Lower leg skin (tissue), 4 donors: ENCODE measurements at regions of chr1 and their contacts with region 1.

Region 1: DNA sequence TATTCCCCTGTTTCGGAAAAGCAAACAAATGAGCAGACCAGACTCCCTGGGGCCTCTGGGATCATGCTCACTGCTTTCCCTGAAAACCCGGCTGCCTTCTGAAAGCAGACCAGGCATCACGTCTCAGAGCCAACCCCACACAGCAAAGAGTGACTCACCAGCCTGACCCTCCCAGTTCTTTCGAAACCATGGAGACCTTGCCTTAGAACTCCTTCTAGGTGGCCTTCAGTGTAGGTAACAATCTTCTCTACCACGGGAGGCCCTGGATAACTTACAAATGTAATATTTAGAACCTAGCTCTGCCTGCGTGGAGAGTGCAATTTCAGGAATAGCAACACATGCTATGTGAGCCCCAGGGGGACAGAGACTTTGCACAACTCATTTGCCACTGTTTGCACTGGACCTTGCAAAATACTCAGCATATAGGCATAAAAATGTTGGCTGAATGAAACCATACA is 105.2 kb downstream of the SUSD4 start:
- DNase-seq: no peak
- H3K4me3 ChIP-seq: no peak overlapping the region
- CTCF ChIP-seq: no peak
- POLR2A ChIP-seq: no peak

Region 2: DNA sequence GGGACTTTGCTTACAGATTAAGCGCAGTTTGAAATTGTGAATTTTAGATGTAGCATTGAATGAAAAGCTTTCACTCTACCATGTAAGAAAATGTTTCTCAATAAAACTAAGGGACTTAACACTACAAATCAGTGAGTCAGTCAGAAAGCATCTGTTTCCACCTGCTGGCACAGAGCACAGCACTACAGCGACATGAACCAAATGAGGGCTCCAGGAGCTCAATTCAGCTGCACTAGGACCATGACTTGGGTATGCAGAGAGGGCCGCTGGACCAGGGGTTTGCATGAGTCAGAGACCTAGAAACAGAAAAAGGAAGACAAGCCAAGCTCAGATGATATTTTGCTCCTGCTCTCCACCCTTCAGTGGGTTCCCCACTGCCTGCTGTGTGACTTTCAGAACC is 100.1 kb after region 1 on chr1:
- intact Hi-C with region 1: loop called (anchors 5 kb)
- DNase-seq: peak in 1 of 2 donors; percentile 67
- H3K4me3 ChIP-seq: no peak overlapping the region
- CTCF ChIP-seq: no peak
- POLR2A ChIP-seq: no peak